PC-9 (cell line): ENCODE measurements at regions of chr12 and their contacts with region 1.

Region 1: GRCh38 chr12:50201978-50202521 is 34.9 kb upstream of the CERS5 start:
- DNase-seq: peak; percentile 75 to 96
- H3K4me3 ChIP-seq: peak overlapping the region; percentile 54; the same call in 1 of the 2 replicates
- H3K27ac ChIP-seq: peak overlapping the region; percentile 100
- H3K4me1 ChIP-seq: peaks cover 59% of the 10 kb centered on the region
- H3K27me3 ChIP-seq: no peaks in the 10 kb centered on the region
- CTCF ChIP-seq: no peak

Region 2: DNA sequence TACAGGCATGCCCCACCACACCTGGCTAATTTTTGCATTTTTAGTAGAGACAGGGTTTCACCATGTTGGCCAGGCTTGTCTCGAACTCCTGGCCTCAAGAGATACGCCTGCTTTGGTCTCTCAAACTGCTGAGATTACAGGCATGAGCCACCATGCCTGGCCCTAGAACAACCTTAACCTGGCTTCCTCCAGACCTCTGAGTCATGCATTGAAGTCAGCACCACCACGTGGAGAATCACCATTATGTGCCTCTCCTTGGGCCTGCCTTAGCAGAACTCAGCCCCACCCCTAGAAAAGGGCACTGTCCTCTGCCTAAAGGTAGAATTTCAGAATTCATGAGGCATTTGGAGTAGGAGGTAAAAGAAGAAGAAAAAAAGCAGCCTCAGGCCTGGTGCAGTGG is 32.3 kb after region 1 on chr12:
- CTCF ChIA-PET with region 1: no interaction called
- POLR2A ChIA-PET with region 1: no interaction called
- intact Hi-C with region 1: no loop called
- DNase-seq: peak in 1 of 2 experiments; percentile 68
- H3K4me3 ChIP-seq: no peak overlapping the region
- H3K27ac ChIP-seq: 0 out of 2 replicates have a peak overlapping the region, but pooled peaks have one; percentile 32
- H3K4me1 ChIP-seq: peaks cover 24% of the 10 kb centered on the region
- H3K27me3 ChIP-seq: no peaks in the 10 kb centered on the region
- CTCF ChIP-seq: no peak

Region 3: DNA sequence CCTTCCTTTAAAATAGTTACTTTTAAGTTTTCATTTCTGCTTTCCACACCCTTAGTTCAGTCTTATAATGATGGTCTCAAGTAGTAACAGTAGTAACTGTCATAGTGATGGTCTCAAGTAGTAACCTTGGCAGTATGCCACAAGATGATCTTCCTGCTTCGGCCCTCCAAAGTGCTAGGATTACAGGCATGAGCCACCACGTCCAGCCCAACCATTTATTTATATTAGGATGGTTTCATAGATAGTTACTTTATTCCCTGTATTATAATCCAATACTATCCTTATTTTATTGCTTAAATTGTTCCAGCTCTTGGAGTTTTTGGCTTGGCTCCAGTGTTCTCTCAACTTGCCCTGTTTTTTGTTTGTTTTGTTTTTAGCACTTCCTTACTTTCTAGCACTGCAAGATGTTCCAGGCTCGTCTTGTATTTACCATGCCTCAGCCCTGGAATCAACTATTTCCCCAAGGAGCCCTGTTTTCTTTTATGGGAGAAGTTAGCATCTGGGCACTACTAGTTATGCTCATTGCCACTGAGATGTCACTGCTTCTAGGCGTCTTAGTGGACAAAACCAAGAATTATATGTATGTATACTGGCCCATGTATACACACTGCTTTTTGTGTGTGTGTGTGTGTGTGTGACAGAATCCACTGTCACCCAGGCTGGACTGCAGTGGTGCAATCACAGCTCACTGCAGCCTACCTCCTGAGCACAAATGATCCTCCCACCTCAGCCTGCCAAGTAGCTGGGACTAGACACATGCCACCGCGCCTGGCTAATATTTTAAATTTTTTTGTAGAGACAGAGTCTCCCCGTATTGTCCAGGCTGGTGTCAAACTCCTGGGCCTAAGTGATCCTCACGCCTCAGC is 55.9 kb after region 1 on chr12:
- CTCF ChIA-PET with region 1: interaction called, 5 read pairs
- POLR2A ChIA-PET with region 1: interaction called, 3 read pairs
- intact Hi-C with region 1: loop called (anchors 1 kb)
- DNase-seq: no peak
- H3K4me3 ChIP-seq: no peak overlapping the region
- H3K27ac ChIP-seq: peak overlapping the region; percentile 98
- H3K4me1 ChIP-seq: peaks cover 73% of the 10 kb centered on the region
- H3K27me3 ChIP-seq: no peaks in the 10 kb centered on the region
- CTCF ChIP-seq: no peak

Region 4: GRCh38 chr12:50458606-50459005 is 256.6 kb after region 1 on chr12:
- CTCF ChIA-PET with region 1: no interaction called
- POLR2A ChIA-PET with region 1: no interaction called
- intact Hi-C with region 1: no loop called
- DNase-seq: peak in 1 of 2 experiments; percentile 66
- H3K4me3 ChIP-seq: no peak overlapping the region
- H3K27ac ChIP-seq: 0 out of 2 replicates have a peak overlapping the region, but pooled peaks have one; percentile 8
- H3K4me1 ChIP-seq: peaks cover 7% of the 10 kb centered on the region; the same call in 1 of the 2 replicates
- H3K27me3 ChIP-seq: no peaks in the 10 kb centered on the region
- CTCF ChIP-seq: no peak